ENCODE measurements at regions of chr1 and their contacts with region 1.

Region 1: DNA sequence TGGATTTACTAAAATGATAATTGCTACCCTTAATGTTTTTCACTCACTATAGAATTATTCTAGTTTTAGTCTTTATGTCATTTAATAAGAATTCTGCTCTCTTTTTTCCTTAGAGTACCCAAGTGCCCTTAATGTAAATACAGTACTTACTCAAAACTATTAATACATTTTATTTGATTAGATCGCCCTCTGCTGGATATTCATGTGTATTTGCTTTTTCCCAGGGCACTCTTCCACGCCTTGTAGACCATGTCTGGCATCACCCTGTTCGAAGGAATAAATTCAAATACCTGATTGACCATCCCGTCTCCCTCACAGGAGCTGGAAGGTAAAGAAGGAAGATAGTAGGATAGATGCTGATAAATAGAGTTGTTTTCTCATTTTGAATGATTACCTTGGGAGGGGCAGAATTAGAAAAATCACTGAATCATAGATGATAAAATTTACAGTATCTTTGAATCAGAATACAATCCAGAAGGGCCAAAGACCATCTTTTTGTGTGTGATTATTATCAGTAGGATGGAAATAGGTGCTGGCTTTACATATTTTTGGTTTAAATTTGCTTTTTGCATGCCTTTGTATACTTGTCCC is 4.1 kb downstream of the AXDND1 start:
- DNase-seq: no peak
- H3K4me3 ChIP-seq: no peak overlapping the region
- H3K27me3 ChIP-seq: no peaks in the 10 kb centered on the region
- CTCF ChIP-seq: peak; percentile 52

Region 2: DNA sequence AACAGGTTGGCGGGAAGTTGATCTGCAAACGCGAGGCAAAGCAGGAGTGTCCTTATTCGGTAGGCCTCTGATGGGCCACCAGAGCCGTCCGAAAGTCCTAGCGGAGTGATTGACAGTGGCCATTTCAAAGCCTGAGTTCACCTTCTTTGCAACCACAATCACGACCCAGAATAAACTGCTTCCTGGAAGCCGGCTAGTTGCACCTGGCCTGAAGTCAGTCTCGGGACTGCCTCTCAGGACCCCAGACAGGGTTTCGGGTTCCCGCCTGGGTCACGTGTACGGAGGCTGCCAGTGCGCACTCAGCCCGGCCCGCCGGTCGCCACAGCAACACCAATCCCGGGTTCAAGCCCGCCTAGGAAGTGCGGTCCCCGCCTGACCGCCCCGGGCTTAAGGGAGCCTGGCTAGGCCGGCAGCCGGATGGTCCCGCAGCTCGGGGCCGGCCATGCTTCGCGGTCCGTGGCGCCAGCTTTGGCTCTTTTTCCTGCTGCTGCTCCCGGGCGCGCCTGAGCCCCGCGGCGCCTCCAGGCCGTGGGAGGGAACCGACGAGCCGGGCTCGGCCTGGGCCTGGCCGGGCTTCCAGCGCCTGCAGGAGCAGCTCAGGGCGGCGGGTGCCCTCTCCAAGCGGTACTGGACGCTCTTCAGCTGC is 288.0 kb before region 1 on chr1 and contains the start of gene TOR3A:
- CTCF ChIA-PET with region 1: interaction called, 10 read pairs
- POLR2A ChIA-PET with region 1: no interaction called
- DNase-seq: no peak
- H3K4me3 ChIP-seq: peak within 1 kb of the TSS; percentile 90
- H3K27me3 ChIP-seq: no peaks in the 10 kb centered on the region
- CTCF ChIP-seq: no peak
- polyA plus RNA-seq, gene TOR3A: 25.7 and 30.8 TPM in 2 replicates

Region 3: GRCh38 chr1:179251675-179252074 is 118.2 kb before region 1 on chr1:
- CTCF ChIA-PET with region 1: interaction called, 66 read pairs
- POLR2A ChIA-PET with region 1: no interaction called
- DNase-seq: peak; percentile 9
- H3K4me3 ChIP-seq: no peak overlapping the region
- H3K27me3 ChIP-seq: no peaks in the 10 kb centered on the region
- CTCF ChIP-seq: peak; percentile 55

Region 4: DNA sequence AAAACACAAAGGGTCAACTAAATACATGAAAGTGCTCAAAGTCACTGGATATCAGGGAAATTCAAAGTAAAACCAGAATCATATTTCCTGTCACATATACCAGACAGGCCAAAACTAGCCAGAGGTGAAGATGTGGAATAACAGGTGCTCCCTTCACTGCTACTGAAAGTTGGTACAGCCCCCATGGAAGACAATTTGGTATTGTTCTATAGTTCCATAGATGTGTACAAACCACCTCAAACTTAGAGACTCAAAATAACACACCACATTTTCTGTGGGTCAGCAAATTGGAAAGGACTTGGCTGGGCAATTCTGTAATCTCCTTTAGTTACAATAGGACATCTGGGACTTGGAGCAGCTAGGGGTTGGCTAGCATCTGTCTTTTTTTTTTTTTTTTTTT is 100.8 kb before region 1 on chr1:
- CTCF ChIA-PET with region 1: no interaction called
- POLR2A ChIA-PET with region 1: no interaction called
- DNase-seq: no peak
- H3K4me3 ChIP-seq: no peak overlapping the region
- H3K27me3 ChIP-seq: no peaks in the 10 kb centered on the region
- CTCF ChIP-seq: no peak

Region 5: DNA sequence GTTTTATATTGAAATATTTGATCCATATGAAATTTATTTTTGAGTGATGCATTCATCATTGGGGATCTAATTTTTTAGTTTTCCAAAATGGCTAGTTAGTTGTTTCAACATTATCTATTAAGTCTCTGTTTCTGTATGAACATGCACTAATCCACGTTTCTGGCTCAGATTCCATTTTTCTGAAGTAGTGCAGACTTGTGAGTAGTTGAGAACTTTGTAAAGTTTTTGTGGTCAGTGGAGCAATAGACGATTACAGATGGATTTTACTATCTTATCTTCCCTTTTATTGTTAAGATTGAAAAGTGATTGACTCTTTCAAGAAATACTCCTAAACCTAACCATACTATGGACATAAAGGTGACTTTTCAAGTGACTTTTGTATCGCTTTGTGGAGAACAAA is 59.6 kb before region 1 on chr1:
- CTCF ChIA-PET with region 1: no interaction called
- POLR2A ChIA-PET with region 1: no interaction called
- DNase-seq: peak; percentile 5
- H3K4me3 ChIP-seq: no peak overlapping the region
- H3K27me3 ChIP-seq: no peaks in the 10 kb centered on the region
- CTCF ChIP-seq: no peak

Region 6: DNA sequence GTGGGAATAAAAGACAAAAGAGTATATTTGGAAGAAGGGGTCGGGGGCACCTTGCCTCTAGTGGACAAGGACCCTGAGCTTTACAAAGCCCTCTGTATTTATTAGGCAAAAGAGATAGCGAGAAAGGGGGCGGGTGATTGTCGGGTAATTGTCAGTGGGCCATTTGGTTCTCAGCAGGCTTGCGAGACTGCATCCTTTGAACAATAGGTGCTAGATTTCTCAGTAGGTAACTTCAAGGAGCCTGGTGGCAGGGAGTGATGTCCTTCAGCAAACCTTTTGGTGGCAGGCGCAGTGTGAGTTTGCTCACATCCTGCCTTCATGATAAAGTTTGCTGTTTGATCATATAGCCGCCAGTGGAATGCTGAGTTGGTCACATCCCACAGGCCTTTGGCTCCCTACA is 67.3 kb after region 1 on chr1:
- CTCF ChIA-PET with region 1: no interaction called
- POLR2A ChIA-PET with region 1: no interaction called
- DNase-seq: no peak
- H3K4me3 ChIP-seq: no peak overlapping the region
- H3K27me3 ChIP-seq: no peaks in the 10 kb centered on the region
- CTCF ChIP-seq: no peak